Heart right ventricle (tissue), 16 donors: ENCODE measurements at regions of chr4 and their contacts with region 1.

Region 1: GRCh38 chr4:102449751-102450352 is 51.3 kb upstream of the NFKB1 start:
- DNase-seq: peak in 1 of 2 donors; percentile 48
- ATAC-seq: peak in 4 of 8 donors; percentile 55 to 79 (median 65)
- H3K4me3 ChIP-seq: no peak overlapping the region
- H3K27ac ChIP-seq: no peak overlapping the region
- H3K4me1 ChIP-seq: no peaks in the 10 kb centered on the region
- H3K27me3 ChIP-seq: no peaks in the 10 kb centered on the region
- CTCF ChIP-seq: peak; percentile 30 to 79 (median 70)

Region 2: DNA sequence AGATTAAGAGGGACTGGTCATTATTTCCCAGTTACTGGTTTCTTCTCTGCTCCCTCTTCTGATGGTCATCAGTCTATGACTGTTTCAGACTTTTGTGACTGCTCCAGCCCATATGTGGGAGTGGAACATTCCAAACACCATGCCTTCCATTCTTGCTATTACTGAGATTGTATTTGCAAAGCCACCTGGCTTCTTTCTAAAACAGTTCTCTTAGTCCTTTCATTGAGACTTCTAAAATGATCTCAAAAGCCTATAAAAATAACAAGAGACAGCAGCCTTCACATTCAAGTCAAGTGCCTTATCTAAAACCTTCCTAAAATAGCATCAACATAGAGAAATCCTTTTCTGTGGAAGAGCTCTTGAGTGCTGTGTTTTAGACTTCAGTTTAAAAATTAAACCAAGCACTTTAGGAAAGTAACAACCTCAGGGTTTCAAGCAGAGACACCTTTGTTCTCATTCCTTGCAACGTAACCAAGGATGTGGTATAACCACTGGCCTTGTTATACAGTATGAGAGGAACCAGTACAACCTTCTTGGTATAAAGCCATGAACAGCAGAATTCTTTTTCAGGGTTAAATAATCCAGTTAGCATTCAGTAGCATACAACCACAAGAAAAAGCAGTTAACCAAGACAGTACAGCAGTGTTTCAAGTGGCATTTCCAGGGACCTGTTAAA is 148.4 kb after region 1 on chr4:
- intact Hi-C with region 1: loop called in 2 of 10 experiments (anchors 10 kb)
- DNase-seq: no peak
- ATAC-seq: peak in 7 of 8 donors; percentile 42 to 79 (median 66)
- H3K4me3 ChIP-seq: no peak overlapping the region
- H3K27ac ChIP-seq: peak overlapping the region in 6 of 10 donors; percentile 11 to 53 (median 47)
- H3K4me1 ChIP-seq: peaks cover 0 to 19% (median 6%) of the 10 kb centered on the region in 9 donors
- H3K27me3 ChIP-seq: no peaks in the 10 kb centered on the region
- CTCF ChIP-seq: no peak

Region 3: DNA sequence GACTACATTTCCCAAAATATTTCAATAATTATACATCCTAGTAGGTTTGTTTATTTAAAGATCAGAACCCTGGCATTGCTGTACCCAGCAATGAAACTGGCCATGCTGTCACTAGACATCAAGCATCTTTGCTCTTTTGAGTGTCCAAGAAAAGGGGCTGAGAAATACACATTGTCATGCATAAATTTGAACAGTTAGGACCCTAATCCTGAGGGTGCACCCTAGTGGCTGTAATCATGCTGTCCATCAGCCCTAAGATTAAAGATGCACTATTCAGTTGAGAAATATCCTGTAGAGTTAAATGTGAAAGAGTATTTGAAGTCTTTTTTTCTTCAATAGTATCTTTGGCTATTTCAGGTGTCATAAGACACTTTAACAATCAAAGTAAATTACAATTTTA is 160.2 kb after region 1 on chr4:
- intact Hi-C with region 1: loop called in 3 of 10 experiments (anchors 10 kb)
- DNase-seq: no peak
- ATAC-seq: no peak
- H3K4me3 ChIP-seq: no peak overlapping the region
- H3K27ac ChIP-seq: no peak overlapping the region
- H3K4me1 ChIP-seq: peaks cover 0 to 19% (median 1%) of the 10 kb centered on the region in 9 donors
- H3K27me3 ChIP-seq: no peaks in the 10 kb centered on the region
- CTCF ChIP-seq: peak in 4 of 9 donors; percentile 11 to 28 (median 21)

Region 4: DNA sequence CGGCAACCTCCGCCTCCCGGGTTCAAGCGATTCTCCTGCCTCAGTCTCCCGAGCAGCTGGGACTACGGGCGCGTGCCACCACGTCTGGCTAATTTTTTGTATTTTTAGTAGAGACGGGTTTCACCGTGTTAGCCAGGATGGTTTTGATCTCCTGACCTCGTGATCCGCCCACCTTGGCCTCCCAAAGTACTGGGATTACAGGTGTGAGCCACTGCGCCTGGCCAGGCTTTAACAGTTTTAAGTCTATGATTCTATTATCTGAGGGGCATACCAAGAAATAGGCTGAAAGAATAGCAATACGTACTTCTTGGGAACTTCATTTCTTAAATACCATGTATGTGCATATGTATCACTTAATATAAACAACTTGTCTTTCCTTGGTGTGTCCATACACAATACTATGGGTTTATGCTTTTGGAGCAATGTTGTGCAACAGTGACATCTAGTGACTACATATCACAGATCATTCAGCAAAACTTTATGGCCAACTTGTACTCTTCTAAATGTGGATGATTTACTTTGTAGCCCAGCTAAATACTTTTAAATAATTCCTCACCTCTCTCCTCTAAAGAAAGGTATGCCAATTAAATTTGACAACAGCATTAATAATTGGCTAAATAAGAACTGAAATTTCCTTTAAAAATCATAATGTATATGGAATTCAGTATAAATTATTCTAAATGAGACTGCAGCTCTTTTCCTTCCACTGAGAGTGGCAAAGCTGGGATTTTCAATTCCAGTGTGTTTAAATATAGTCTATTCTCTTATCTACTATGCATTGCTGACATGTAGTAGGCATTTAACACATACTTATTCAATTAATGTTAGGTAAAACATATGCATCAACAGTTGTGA is 559.2 kb after region 1 on chr4:
- intact Hi-C with region 1: loop called (anchors 2 to 10 kb)
- DNase-seq: peak in 1 of 2 donors; percentile 23
- ATAC-seq: peak; percentile 47 to 89 (median 78)
- H3K4me3 ChIP-seq: no peak overlapping the region
- H3K27ac ChIP-seq: no peak overlapping the region
- H3K4me1 ChIP-seq: peaks cover 0 to 15% (median 11%) of the 10 kb centered on the region in 9 donors
- H3K27me3 ChIP-seq: no peaks in the 10 kb centered on the region
- CTCF ChIP-seq: peak; percentile 60 to 94 (median 81)

Region 5: DNA sequence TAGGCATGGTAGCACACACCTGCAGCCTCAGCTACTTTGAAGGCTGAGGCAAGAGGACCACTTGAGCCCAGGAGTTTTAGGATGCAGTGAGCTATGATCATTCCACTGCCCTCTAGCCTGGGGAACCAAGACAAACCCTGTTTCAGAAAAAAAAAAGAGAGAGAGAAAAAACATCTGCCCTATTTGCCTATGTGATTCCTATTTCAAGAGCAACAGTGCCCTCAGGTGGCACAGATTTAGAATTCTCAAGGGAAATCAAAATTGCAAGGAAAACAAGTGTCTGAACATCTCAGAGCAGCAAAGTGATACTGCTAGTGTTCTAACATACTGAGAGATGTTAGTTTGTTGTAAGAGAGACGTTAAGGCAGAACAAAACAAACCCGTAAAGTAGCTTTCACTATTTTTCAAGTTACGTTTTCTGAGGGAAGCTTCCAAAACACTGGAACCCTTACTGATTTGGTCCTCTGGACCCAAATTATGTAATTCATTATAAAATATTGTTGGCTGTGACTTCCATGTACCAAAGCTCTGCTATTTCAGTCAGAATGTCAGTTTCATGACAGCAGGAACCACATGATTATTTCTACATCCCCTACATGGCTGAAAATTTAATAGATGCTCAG is 641.9 kb after region 1 on chr4:
- intact Hi-C with region 1: loop called in 3 of 10 experiments (anchors 5 to 10 kb)
- DNase-seq: no peak
- ATAC-seq: peak in 3 of 8 donors; percentile 19 to 48 (median 45)
- H3K4me3 ChIP-seq: no peak overlapping the region
- H3K27ac ChIP-seq: no peak overlapping the region
- H3K4me1 ChIP-seq: peaks cover 0 to 14% (median 0%) of the 10 kb centered on the region in 9 donors
- H3K27me3 ChIP-seq: no peaks in the 10 kb centered on the region
- CTCF ChIP-seq: peak in 7 of 9 donors; percentile 27 to 58 (median 54)